ENCODE measurements at regions of chr20 and their contacts with region 1.

Region 1: DNA sequence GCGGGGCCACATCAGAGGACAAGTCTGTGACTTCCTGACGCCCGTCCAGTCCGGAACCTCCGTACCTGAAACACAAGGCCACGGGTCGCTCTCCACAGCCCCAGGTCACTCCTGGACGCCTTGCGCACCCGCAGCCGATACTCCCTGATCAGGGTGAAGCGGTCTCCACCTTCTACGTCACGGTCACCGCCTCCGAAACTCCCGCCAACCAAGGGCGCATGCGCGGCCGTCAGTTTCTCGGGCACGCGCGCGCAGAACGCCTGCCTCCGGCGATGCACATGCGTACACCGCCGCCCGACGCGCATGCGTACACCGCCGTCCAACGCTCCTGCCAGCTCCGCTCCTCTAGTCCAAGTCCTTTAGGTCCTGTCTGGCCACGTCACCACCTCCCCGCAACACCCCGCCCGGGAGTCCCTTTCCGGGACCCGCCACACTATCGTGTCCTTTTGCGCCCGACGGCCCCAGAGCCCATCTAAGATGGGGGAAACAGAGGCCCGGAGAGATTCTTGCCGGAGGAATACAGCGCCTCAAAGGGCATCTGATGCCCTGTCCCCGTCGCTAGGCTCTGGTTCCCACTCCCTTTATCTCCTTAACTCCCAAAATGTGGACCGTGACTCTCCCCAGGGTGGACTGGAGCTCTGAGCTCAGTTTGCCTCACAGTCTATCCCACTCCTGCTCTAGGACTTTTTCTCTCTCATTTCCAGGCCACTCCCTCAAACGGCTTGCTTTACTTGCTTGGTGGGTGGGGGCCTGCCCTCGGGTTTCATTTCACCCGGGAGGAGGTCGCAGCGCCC is at the start of gene DSN1:
- DNase-seq: peak; percentile 98
- CTCF ChIP-seq: no peak

Region 2: GRCh38 chr20:36700438-36700837 is 73.4 kb before region 1 on chr20:
- CTCF ChIA-PET with region 1: no interaction called
- POLR2A ChIA-PET with region 1: no interaction called
- DNase-seq: no peak
- CTCF ChIP-seq: no peak

Region 3: GRCh38 chr20:36754656-36755222 is 19.1 kb before region 1 on chr20:
- CTCF ChIA-PET with region 1: interaction called, 20 read pairs
- POLR2A ChIA-PET with region 1: no interaction called
- DNase-seq: peak; percentile 50
- CTCF ChIP-seq: peak; percentile 62

Region 4: GRCh38 chr20:36792422-36792821 is 18.6 kb after region 1 on chr20:
- CTCF ChIA-PET with region 1: interaction called, 12 read pairs
- POLR2A ChIA-PET with region 1: no interaction called
- DNase-seq: peak; percentile 57
- CTCF ChIP-seq: peak; percentile 29

Measured in GM10248 (cell line).